Activated CD4-positive, alpha-beta T cell treated with anti-CD3 and anti-CD28 coated beads for 36 hours (primary cell): ENCODE measurements at regions of chr3 and their contacts with region 1.

Region 1: GRCh38 chr3:98593046-98593936 is at the start of gene CPOX:
- DNase-seq: peak; percentile 95
- ATAC-seq: peak; percentile 99
- H3K4me3 Mint-ChIP-seq: peak within 1 kb of the TSS; percentile 88
- H3K27ac Mint-ChIP-seq: peak within 1 kb of the TSS; percentile 90
- H3K4me1 Mint-ChIP-seq: peaks cover 51% of the 10 kb centered on the region
- H3K27me3 Mint-ChIP-seq: no peaks in the 10 kb centered on the region
- total RNA-seq, gene CPOX: 40.3 to 41.9 TPM

Region 2: GRCh38 chr3:97764407-97765238 is 828.7 kb before region 1 on chr3 and contains the start of gene ARL6:
- CTCF ChIA-PET with region 1: no interaction called
- POLR2A ChIA-PET with region 1: no interaction called
- intact Hi-C with region 1: loop called in 1 of 2 experiments (anchors 2 kb)
- DNase-seq: peak; percentile 86
- ATAC-seq: peak; percentile 95
- H3K4me3 Mint-ChIP-seq: peak within 1 kb of the TSS; percentile 97
- H3K27ac Mint-ChIP-seq: peak within 1 kb of the TSS; percentile 97
- H3K4me1 Mint-ChIP-seq: peaks cover 25% of the 10 kb centered on the region
- H3K27me3 Mint-ChIP-seq: no peaks in the 10 kb centered on the region
- total RNA-seq, gene ARL6: 6.9 TPM

Region 3: DNA sequence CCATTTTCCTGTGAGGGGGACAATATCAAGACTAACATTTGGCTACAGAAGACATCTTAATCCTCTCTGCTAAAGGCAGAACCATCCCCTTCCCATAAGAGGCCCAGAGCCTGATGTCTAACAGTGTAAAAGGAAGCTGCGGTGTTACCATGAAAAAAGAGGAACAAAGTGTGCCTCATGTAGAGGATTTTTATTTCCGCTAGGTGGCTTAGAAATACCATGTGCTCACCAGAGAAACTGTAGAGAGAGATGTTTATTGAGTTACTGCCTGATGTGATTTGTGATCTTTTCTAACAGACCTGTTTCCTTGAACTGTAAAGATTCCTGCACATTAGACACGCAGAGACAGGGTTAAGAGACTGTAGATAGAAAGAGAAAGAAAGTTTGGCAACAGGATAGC is 404.7 kb before region 1 on chr3:
- CTCF ChIA-PET with region 1: no interaction called
- POLR2A ChIA-PET with region 1: no interaction called
- intact Hi-C with region 1: loop called in 1 of 2 experiments (anchors 10 kb)
- DNase-seq: no peak
- ATAC-seq: peak; percentile 49
- H3K4me3 Mint-ChIP-seq: no peak overlapping the region
- H3K27ac Mint-ChIP-seq: no peak overlapping the region
- H3K4me1 Mint-ChIP-seq: peaks cover 4% of the 10 kb centered on the region
- H3K27me3 Mint-ChIP-seq: peaks cover 5% of the 10 kb centered on the region

Region 4: DNA sequence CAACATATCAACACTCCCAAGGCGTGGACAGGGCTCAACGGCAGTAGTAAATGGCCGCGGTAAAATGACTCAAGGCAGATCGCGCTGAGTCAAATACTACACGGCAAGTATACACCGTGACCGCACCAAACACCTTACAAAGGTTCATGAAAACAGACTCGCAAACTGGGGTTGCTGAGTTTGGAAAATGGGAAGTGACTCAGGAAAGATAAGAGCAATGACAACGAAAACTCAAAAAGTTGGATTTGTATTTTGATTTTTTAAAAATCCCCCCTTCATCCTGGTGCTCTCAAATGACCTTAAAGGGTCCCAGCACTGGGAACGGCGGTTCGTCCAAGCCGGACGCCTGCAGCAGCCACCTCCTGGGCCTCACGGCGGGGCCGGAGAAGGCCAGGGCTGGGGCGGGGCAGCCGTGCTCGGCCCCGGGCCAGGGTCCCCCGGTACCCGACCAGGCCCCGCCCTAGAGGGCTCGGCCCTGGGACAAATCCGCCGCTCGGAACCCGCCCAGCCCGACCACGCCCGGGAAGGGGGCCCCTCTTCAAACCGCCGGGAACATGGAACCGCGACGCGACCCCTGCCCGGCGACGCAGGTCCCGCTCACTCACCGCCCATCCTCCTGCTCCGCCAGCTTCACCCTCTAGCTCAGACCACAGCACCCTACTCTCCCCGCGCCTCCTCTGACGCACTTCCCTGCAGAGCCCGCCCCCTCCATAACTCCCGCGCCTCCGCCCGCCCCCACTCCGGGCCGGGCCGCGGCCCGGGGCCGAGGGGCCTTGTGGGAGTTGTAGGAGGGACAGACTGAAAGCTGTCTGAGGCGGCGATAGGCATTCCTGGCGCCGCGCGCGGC is 70.8 kb before region 1 on chr3 and contains the start of gene CLDND1:
- CTCF ChIA-PET with region 1: interaction called, 9 read pairs
- POLR2A ChIA-PET with region 1: interaction called, 13 read pairs
- intact Hi-C with region 1: loop called (anchors 1 kb)
- DNase-seq: peak; percentile 97
- ATAC-seq: peak; percentile 94
- H3K4me3 Mint-ChIP-seq: peak within 1 kb of the TSS; percentile 95
- H3K27ac Mint-ChIP-seq: peak within 1 kb of the TSS; percentile 95
- H3K4me1 Mint-ChIP-seq: peaks cover 66% of the 10 kb centered on the region
- H3K27me3 Mint-ChIP-seq: no peaks in the 10 kb centered on the region
- total RNA-seq, gene CLDND1: 153 to 171 TPM

Region 5: DNA sequence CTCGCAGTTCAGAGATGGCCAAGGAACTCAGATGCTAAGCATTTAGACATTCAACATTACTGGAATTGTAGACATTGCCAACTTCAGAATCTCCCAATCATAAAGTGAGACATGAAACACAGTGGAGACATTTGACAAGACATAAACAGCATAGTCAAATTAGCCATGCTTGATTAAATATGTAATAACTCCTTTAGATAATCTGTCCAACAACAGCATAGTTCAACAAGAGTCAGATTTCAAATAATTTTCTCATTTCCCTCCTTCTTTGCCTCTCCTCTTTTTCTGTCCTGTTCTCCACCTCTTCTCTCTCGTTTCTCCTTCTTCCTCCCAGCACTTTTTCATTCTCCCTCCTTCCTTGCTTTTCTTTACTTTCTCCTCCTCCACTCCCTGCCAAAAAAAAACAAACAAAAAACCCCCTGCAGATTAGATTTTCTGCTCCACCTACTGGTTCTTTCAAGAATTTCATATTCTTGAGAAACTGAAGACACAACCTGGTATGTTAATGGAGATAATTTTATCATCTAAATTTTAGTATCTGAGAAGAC is 20.0 kb before region 1 on chr3:
- CTCF ChIA-PET with region 1: interaction called, 15 read pairs
- POLR2A ChIA-PET with region 1: no interaction called
- intact Hi-C with region 1: no loop called
- DNase-seq: no peak
- ATAC-seq: no peak
- H3K4me3 Mint-ChIP-seq: peak overlapping the region; percentile 11
- H3K27ac Mint-ChIP-seq: peak overlapping the region; percentile 70
- H3K4me1 Mint-ChIP-seq: peaks cover 49% of the 10 kb centered on the region
- H3K27me3 Mint-ChIP-seq: peaks cover 4% of the 10 kb centered on the region

Region 6: GRCh38 chr3:98901392-98902350 is 308.4 kb after region 1 on chr3 and contains the start of gene DCBLD2:
- CTCF ChIA-PET with region 1: no interaction called
- POLR2A ChIA-PET with region 1: no interaction called
- intact Hi-C with region 1: loop called (anchors 1 to 5 kb)
- DNase-seq: peak; percentile 96
- ATAC-seq: peak; percentile 100
- H3K4me3 Mint-ChIP-seq: peak within 1 kb of the TSS; percentile 80
- H3K27ac Mint-ChIP-seq: peak within 1 kb of the TSS; percentile 69
- H3K4me1 Mint-ChIP-seq: peaks cover 16% of the 10 kb centered on the region
- H3K27me3 Mint-ChIP-seq: peaks cover 5% of the 10 kb centered on the region
- total RNA-seq, gene DCBLD2: 1.9 to 2.5 TPM